Keratinocyte (primary cell): ENCODE measurements at regions of chr2 and their contacts with region 1.

Region 1: DNA sequence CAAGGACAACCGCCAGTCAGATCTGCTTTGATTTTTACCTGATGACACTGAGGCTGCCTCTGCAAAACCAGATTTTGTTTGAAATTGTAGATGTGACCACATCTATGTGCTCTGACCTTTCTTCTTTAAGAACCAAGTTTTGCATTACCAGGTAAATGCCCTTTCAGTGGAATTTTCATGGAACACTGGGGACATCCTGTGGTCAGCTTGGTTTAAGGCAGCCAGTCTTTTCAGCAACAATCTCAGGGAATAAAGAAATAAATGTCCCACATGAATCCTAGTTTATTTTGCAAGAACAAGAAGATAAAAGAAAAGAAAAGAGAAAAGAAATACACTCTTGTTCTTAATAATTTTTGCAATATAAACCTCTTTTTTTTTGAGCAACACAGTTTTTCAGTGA is 90.6 kb downstream of the POU3F3 start:
- DNase-seq: no peak
- H3K4me3 ChIP-seq: no peak overlapping the region
- H3K27ac ChIP-seq: no peak overlapping the region
- H3K4me1 ChIP-seq: no peaks in the 10 kb centered on the region
- H3K27me3 ChIP-seq: no peaks in the 10 kb centered on the region
- CTCF ChIP-seq: peak in 2 of 3 experiments; percentile 21 to 32

Region 2: DNA sequence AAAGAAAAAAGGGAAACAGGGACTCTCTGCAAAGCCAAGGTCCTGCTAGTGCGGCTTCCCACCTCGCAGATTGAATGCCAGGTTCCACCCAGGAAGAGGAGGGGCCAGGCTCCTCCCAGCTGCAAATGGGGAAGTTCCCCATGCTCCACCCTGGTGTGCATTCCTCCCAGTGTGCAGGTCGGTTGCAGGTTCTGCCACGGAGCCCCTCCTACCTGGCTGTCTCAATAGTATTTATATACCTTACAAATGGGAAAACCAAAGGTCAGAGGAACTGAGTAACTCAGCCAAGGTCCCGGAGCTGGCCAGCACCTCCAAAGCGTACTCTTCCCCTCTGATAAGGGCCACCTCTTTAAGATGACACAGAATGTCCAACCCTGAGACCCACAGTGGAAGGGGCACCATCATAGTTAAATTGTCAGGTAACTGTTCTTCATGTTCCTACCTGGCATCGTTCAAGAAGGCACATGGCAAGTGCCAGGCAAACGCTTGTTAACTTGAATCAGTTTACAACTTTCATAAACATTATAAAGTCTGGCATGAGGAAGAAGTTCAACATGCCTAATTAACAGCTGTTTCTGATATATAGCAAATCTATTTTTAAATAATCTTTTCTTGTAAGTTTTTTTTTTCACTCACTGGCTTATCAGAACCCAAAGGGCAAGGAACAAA is 55.1 kb before region 1 on chr2:
- dilution Hi-C with region 1: no loop called
- DNase-seq: no peak
- H3K4me3 ChIP-seq: no peak overlapping the region
- H3K27ac ChIP-seq: no peak overlapping the region
- H3K4me1 ChIP-seq: no peaks in the 10 kb centered on the region
- H3K27me3 ChIP-seq: no peaks in the 10 kb centered on the region
- CTCF ChIP-seq: no peak

Region 3: GRCh38 chr2:104976603-104977120 is 32.2 kb after region 1 on chr2:
- dilution Hi-C with region 1: no loop called
- DNase-seq: no peak
- H3K4me3 ChIP-seq: no peak overlapping the region
- H3K27ac ChIP-seq: no peak overlapping the region
- H3K4me1 ChIP-seq: no peaks in the 10 kb centered on the region
- H3K27me3 ChIP-seq: no peaks in the 10 kb centered on the region
- CTCF ChIP-seq: peak in 1 of 3 experiments; percentile 5

Region 4: GRCh38 chr2:105005181-105005951 is 60.9 kb after region 1 on chr2:
- dilution Hi-C with region 1: loop called (anchors 5 kb)
- DNase-seq: no peak
- H3K4me3 ChIP-seq: no peak overlapping the region
- H3K27ac ChIP-seq: no peak overlapping the region
- H3K4me1 ChIP-seq: no peaks in the 10 kb centered on the region
- H3K27me3 ChIP-seq: no peaks in the 10 kb centered on the region
- CTCF ChIP-seq: no peak